Activated CD4-positive, alpha-beta memory T cell treated with anti-CD3 and anti-CD28 coated beads for 36 hours (primary cell): ENCODE measurements at regions of chr11 and their contacts with region 1.

Region 1: DNA sequence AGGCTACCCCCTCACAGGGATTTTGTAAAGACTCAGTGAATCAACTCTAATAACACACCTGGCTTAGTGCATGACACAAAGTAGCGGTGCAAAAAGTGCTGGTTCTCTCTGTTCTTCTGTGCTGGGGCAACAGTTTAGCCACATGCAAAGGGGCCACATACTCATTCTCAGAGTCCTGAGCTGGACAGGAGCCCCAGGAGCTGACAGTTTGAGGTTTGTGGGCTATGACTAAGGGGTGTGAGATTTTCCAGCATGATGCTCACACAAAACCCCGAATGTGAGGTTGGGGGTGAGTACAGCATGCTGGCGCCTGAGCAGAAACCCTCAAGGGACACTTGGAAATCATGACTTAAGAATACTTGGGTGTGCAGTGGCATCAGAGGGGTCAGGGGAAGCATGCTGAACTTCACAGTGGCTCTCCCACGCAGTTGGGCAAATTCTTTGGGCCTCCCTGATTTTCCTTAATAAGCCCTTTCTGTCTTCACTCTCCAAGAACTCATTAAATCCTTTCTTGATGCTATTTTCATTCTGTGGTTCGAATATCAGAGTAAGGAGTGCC is 31.0 kb downstream of the TMPRSS5 start:
- DNase-seq: peak; percentile 56
- H3K4me3 Mint-ChIP-seq: no peak overlapping the region
- H3K27ac Mint-ChIP-seq: no peak overlapping the region
- H3K4me1 Mint-ChIP-seq: peaks cover 2% of the 10 kb centered on the region
- H3K27me3 Mint-ChIP-seq: peaks cover 3% of the 10 kb centered on the region

Region 2: GRCh38 chr11:113593698-113594308 is 81.3 kb before region 1 on chr11:
- CTCF ChIA-PET with region 1: no interaction called
- POLR2A ChIA-PET with region 1: no interaction called
- intact Hi-C with region 1: loop called (anchors 2 kb)
- DNase-seq: peak; percentile 82
- H3K4me3 Mint-ChIP-seq: no peak overlapping the region
- H3K27ac Mint-ChIP-seq: no peak overlapping the region
- H3K4me1 Mint-ChIP-seq: peaks cover 16% of the 10 kb centered on the region
- H3K27me3 Mint-ChIP-seq: peaks cover 36% of the 10 kb centered on the region

Region 3: GRCh38 chr11:113781679-113782078 is 106.6 kb after region 1 on chr11:
- CTCF ChIA-PET with region 1: no interaction called
- POLR2A ChIA-PET with region 1: no interaction called
- intact Hi-C with region 1: no loop called
- DNase-seq: no peak
- H3K4me3 Mint-ChIP-seq: no peak overlapping the region
- H3K27ac Mint-ChIP-seq: no peak overlapping the region
- H3K4me1 Mint-ChIP-seq: no peaks in the 10 kb centered on the region
- H3K27me3 Mint-ChIP-seq: peaks cover 3% of the 10 kb centered on the region